MCF 10A (cell line): ENCODE measurements at regions of chr16 and their contacts with region 1.

Region 1: DNA sequence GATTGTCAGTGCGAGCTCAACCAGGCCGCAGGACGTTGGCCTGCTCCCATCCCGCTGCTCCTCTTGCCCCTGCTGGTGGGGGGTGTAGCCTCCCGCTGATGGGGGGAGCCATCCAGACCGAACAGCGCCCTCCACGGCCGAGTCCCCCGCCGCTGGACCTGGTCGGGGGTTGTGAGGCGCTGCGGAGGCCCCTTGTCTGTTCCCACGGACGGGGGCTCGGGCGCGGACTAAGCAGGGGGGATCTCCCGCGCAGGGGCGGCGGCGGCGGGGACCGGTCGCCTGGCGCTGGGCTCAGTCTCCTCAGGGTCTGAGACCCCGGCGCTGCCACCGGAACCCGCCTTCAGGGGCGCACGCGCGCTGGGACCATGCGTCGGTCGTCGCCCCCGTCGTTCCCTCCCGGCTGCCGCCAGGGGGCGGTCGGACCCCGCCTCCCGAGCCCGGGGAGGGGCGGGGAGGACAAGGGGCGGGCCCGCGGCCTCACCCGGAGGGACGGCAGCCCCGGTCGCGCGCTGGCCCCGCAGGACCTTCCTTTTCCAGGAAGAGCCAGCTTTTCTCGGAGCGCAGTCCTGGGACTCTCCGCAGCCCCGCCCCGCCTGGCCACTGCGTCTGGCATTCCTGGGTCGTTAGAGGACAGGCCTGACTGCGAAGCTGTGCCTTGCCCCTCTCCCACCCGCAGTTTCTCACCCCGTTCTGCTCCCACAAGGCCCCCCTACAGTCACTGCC is 6.3 kb upstream of the IL32 start:
- DNase-seq: peak; percentile 84
- H3K4me3 Mint-ChIP-seq: peak overlapping the region; percentile 78
- H3K27ac Mint-ChIP-seq: peak overlapping the region; percentile 74
- H3K4me1 Mint-ChIP-seq: no peaks in the 10 kb centered on the region
- H3K27me3 Mint-ChIP-seq: no peaks in the 10 kb centered on the region
- CTCF ChIP-seq: peak; percentile 90

Region 2: GRCh38 chr16:3029537-3030402 is 29.4 kb before region 1 on chr16:
- CTCF ChIA-PET with region 1: interaction called, 33 read pairs
- POLR2A ChIA-PET with region 1: interaction called, 9 read pairs
- intact Hi-C with region 1: no loop called
- DNase-seq: no peak
- H3K4me3 Mint-ChIP-seq: no peak overlapping the region
- H3K27ac Mint-ChIP-seq: no peak overlapping the region
- H3K4me1 Mint-ChIP-seq: no peaks in the 10 kb centered on the region
- H3K27me3 Mint-ChIP-seq: peaks cover 27% of the 10 kb centered on the region
- CTCF ChIP-seq: no peak

Region 3: GRCh38 chr16:3112058-3112880 is 53.1 kb after region 1 on chr16 and contains the start of gene ZNF205:
- CTCF ChIA-PET with region 1: interaction called, 20 read pairs
- POLR2A ChIA-PET with region 1: interaction called, 4 read pairs
- intact Hi-C with region 1: no loop called
- DNase-seq: peak; percentile 79
- H3K4me3 Mint-ChIP-seq: peak within 1 kb of the TSS; percentile 85
- H3K27ac Mint-ChIP-seq: peak within 1 kb of the TSS; percentile 29
- H3K4me1 Mint-ChIP-seq: peaks cover 13% of the 10 kb centered on the region
- H3K27me3 Mint-ChIP-seq: no peaks in the 10 kb centered on the region
- CTCF ChIP-seq: no peak
- total RNA-seq, gene ZNF205: 11.8 and 12.1 TPM in 2 replicates

Region 4: GRCh38 chr16:3123986-3124886 is 65.1 kb after region 1 on chr16:
- CTCF ChIA-PET with region 1: interaction called, 48 read pairs
- POLR2A ChIA-PET with region 1: interaction called, 47 read pairs
- intact Hi-C with region 1: loop called (anchors 1 kb)
- DNase-seq: peak; percentile 96
- H3K4me3 Mint-ChIP-seq: peak overlapping the region; percentile 91
- H3K27ac Mint-ChIP-seq: peak overlapping the region; percentile 90
- H3K4me1 Mint-ChIP-seq: peaks cover 21% of the 10 kb centered on the region
- H3K27me3 Mint-ChIP-seq: no peaks in the 10 kb centered on the region
- CTCF ChIP-seq: peak; percentile 21

Region 5: GRCh38 chr16:3165111-3165822 is 106.1 kb after region 1 on chr16:
- CTCF ChIA-PET with region 1: interaction called, 11 read pairs
- POLR2A ChIA-PET with region 1: no interaction called
- intact Hi-C with region 1: loop called (anchors 5 kb)
- DNase-seq: no peak
- H3K4me3 Mint-ChIP-seq: no peak overlapping the region
- H3K27ac Mint-ChIP-seq: no peak overlapping the region
- H3K4me1 Mint-ChIP-seq: no peaks in the 10 kb centered on the region
- H3K27me3 Mint-ChIP-seq: no peaks in the 10 kb centered on the region
- CTCF ChIP-seq: no peak

Region 6: DNA sequence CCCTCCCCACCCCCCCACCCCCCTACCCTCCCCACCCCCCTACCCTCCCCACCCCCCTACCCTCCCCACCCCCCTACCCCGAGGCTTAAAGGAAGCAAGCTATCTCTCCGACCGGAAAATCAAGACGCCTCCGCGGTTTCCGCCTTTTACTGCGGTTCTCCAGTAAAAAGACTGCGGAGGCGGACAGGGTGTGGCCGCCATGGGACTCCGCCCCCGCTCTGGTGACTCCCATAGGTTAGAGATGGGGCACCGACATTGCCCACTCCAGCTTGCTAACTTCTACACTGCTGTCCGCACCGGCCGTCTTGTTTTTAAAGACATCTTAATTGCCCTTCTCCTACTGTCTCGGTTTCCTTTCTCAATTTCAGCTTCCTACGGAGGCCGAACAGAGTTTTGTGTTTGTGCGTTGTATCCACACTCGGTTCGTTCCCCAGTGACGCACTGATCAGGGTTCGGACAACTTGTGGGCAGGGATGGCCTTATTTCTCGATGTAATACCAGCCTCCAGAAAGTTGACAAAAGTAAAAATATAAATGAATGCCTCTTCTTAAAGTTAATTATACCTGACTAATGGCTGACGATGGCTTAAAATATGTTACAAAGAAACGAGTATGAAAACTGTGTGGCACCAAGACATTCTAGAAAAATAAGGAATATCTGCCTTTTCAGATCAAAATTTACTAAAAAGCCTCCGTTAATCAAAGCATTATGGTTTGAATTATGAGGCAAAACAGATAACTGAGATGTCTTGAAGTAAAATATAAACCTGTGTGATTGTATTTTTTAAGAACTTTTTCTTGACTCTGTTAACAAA is 176.9 kb after region 1 on chr16:
- CTCF ChIA-PET with region 1: no interaction called
- POLR2A ChIA-PET with region 1: no interaction called
- intact Hi-C with region 1: no loop called
- DNase-seq: peak; percentile 33
- H3K4me3 Mint-ChIP-seq: peak overlapping the region; percentile 66
- H3K27ac Mint-ChIP-seq: no peak overlapping the region
- H3K4me1 Mint-ChIP-seq: peaks cover 4% of the 10 kb centered on the region
- H3K27me3 Mint-ChIP-seq: no peaks in the 10 kb centered on the region
- CTCF ChIP-seq: no peak

Region 7: DNA sequence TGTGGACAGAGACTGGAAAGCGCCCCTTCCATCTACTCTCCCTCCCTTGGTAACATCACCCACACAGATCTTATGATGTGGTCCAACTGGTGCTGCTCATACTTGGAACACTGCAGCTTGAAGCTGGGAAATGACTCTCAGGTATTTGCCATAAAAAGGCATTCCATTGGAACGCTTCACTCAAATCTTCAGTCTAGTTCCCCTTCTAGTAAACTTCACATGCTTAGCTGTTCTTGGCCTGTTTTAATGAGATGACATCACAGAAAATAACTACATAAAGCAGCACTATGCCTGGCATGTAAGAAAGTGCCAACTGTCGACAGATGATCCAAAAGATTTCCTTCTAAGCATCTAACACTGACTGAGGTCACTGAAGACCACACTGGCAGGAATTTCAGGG is 233.4 kb after region 1 on chr16:
- CTCF ChIA-PET with region 1: no interaction called
- POLR2A ChIA-PET with region 1: no interaction called
- intact Hi-C with region 1: no loop called
- DNase-seq: no peak
- H3K4me3 Mint-ChIP-seq: no peak overlapping the region
- H3K27ac Mint-ChIP-seq: no peak overlapping the region
- H3K4me1 Mint-ChIP-seq: no peaks in the 10 kb centered on the region
- H3K27me3 Mint-ChIP-seq: no peaks in the 10 kb centered on the region
- CTCF ChIP-seq: no peak